GM12878 (cell line): ENCODE measurements at regions of chr9 and their contacts with region 1.

Region 1: GRCh38 chr9:128643519-128644300 is 12.9 kb downstream of the DYNC2I2 start:
- DNase-seq: peak; percentile 80
- ATAC-seq: peak; percentile 88
- H3K4me3 ChIP-seq: no peak overlapping the region
- H3K27ac ChIP-seq: peak overlapping the region; percentile 95
- H3K4me1 ChIP-seq: peaks cover 11% of the 10 kb centered on the region
- H3K27me3 ChIP-seq: no peaks in the 10 kb centered on the region
- CTCF ChIP-seq: no peak
- EP300 ChIP-seq: no peak
- POLR2A ChIP-seq: peak; percentile 73
- RAD21 ChIP-seq: no peak

Region 2: DNA sequence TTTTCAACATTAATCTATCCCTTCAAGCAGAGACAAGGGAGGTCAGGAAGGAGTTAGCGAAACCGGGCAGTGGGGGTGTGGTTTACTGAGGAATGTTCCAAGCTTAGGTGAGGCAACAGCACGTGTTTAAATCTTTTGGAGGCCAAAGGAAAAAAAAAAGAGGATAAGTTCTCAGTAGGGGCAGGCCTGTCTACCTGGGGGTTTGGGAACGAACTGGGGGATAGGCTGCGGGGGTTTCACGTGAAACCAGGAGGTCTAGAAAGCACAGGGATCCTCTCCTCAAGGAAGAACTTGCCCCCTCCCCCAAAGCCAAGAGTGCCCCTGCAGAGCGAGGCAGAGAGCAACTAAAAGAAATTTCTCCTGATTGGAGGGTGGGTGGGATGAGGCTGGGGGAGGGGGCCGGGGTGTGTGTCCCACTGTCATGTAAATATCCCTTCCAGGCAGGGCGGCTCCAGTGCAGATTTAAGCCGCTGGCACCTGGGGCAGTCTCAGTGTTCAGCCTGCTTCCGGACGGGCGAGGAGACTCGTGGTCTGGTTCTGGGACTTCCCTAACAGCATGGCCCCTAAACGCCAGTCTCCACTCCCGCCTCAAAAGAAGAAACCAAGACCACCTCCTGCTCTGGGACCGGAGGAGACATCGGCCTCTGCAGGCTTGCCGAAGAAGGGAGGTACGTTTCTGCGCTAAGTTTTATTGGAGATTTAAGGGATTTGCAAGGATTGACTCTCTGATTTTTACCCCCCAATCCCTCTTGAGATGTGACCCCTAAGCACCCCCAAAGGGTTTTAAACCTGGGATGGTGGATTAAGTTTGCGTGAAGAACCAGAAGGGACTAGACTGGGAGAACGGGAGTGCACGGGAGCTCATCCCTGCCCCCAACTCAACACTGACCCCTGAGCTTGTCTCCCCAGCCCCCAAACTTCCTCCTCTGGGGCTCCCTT is 39.9 kb after region 1 on chr9:
- CTCF ChIA-PET with region 1: interaction called, 3 read pairs
- POLR2A ChIA-PET with region 1: interaction called, 33 read pairs
- RAD21 ChIA-PET with region 1: interaction called, 4 read pairs
- SMC1A ChIA-PET with region 1: interaction called, 12 read pairs
- in situ Hi-C with region 1: no loop called
- intact Hi-C with region 1: loop called (anchors 2 kb)
- DNase-seq: no peak
- ATAC-seq: peak; percentile 78
- H3K4me3 ChIP-seq: peak overlapping the region; percentile 95
- H3K27ac ChIP-seq: peak overlapping the region; percentile 96
- H3K4me1 ChIP-seq: peaks cover 13% of the 10 kb centered on the region; the same call in 1 of the 2 replicates
- H3K27me3 ChIP-seq: no peaks in the 10 kb centered on the region
- CTCF ChIP-seq: no peak
- EP300 ChIP-seq: no peak
- POLR2A ChIP-seq: peak; percentile 16; the same call in 1 of the 2 replicates
- RAD21 ChIP-seq: no peak

Region 3: DNA sequence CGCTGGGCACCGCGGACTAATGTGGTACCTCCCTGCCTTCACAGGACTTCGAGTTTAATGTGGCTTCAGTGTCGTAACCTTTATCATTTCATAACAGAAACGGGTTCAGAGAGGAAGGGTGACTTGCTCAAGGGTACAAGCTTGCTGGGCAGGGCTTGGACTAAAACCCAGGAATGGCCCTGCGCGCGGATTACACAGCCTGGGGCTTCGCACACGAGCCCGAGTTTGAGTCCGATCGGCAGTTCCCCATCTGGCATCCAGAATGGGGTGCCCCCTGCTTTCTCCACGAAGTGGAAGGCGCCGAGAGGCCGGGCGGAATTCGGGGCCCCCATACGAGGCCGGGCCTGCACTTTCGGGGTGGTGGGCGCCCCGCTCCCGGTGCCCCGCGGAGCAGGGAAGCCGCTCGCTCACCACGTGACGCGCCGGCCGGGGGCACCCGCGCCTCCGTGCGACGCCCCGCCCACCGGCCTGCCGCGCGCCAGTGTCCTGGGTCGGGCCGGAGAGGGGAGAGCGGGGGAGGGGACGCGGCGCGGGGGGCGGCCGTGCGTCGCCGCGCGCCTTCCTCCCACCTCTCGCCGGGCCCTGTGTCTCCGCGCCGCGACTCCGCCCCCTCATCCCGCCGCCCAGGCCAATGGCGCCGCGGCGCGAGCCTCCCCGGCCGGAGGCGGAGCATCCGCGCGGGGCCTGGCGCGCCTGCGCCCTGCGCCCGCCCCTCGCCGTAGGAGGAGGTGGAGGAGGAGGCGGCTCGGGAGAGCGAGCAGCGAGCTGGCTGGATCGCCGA is 45.0 kb after region 1 on chr9 and contains the start of gene SET:
- CTCF ChIA-PET with region 1: interaction called, 5 read pairs
- POLR2A ChIA-PET with region 1: interaction called, 33 read pairs
- RAD21 ChIA-PET with region 1: interaction called, 4 read pairs
- SMC1A ChIA-PET with region 1: interaction called, 12 read pairs
- in situ Hi-C with region 1: no loop called
- intact Hi-C with region 1: loop called (anchors 2 kb)
- DNase-seq: peak; percentile 73
- ATAC-seq: peak; percentile 76
- H3K4me3 ChIP-seq: peak within 1 kb of the TSS; percentile 100
- H3K27ac ChIP-seq: peak within 1 kb of the TSS; percentile 81
- H3K4me1 ChIP-seq: peaks cover 13% of the 10 kb centered on the region; the same call in 1 of the 2 replicates
- H3K27me3 ChIP-seq: no peaks in the 10 kb centered on the region
- CTCF ChIP-seq: no peak
- EP300 ChIP-seq: no peak
- POLR2A ChIP-seq: peak; percentile 90
- RAD21 ChIP-seq: no peak
- polyA plus RNA-seq, gene SET: 314 to 450 TPM

Region 4: DNA sequence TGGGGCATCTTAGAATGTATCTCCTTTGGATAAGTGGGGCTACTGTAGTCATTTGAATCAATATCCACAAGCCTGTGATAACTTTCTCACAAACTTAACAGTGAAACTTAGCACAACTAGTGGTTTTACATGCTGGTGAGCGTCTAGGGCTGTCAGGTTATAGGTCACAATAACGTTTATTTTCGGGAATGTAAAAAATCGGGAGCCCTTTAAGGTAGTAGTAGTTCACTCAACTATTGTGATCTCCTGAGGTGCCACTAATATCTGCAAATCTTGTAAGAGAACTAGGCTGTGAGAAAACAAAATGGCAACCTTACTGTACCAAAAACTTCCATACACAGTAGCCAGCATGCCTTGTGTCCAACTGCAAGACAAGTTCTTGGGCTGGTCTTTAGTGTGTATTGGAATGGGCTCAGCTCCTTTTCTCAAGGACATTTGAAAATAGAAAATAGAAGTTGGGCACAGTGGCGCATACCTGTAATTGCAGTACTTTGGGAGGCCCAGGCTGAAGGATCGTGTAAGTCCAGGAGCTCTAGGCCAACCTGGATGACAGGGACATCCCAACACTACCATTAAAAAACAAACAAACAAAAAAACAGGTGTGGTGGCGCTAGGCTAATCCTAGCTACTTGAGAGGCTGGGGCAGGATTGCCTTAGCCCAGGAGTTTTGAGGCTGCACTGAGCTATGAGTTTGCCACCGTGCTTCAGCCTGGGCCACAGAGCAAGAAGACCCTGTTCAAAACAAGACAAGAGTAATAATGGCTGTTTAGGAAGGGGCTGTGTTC is 53.4 kb after region 1 on chr9:
- CTCF ChIA-PET with region 1: interaction called, 7 read pairs
- POLR2A ChIA-PET with region 1: interaction called, 11 read pairs
- RAD21 ChIA-PET with region 1: interaction called, 4 read pairs
- SMC1A ChIA-PET with region 1: interaction called, 7 read pairs
- in situ Hi-C with region 1: no loop called
- intact Hi-C with region 1: no loop called
- DNase-seq: no peak
- ATAC-seq: peak; percentile 10; the same call in 2 of the 3 replicates
- H3K4me3 ChIP-seq: no peak overlapping the region
- H3K27ac ChIP-seq: no peak overlapping the region
- H3K4me1 ChIP-seq: peaks cover 3% of the 10 kb centered on the region; the same call in 1 of the 2 replicates
- H3K27me3 ChIP-seq: no peaks in the 10 kb centered on the region
- CTCF ChIP-seq: no peak
- EP300 ChIP-seq: no peak
- POLR2A ChIP-seq: no peak; the same call in 1 of the 2 replicates
- RAD21 ChIP-seq: no peak

Region 5: GRCh38 chr9:128911529-128912035 is 267.9 kb after region 1 on chr9:
- CTCF ChIA-PET with region 1: no interaction called
- POLR2A ChIA-PET with region 1: no interaction called
- RAD21 ChIA-PET with region 1: no interaction called
- SMC1A ChIA-PET with region 1: no interaction called
- in situ Hi-C with region 1: no loop called
- intact Hi-C with region 1: no loop called
- DNase-seq: no peak
- ATAC-seq: no peak
- H3K4me3 ChIP-seq: no peak overlapping the region
- H3K27ac ChIP-seq: no peak overlapping the region
- H3K4me1 ChIP-seq: no peaks in the 10 kb centered on the region
- H3K27me3 ChIP-seq: no peaks in the 10 kb centered on the region
- CTCF ChIP-seq: no peak
- EP300 ChIP-seq: no peak
- POLR2A ChIP-seq: no peak
- RAD21 ChIP-seq: no peak